Calu3 (cell line): ENCODE measurements at regions of chr6 and their contacts with region 1.

Region 1: GRCh38 chr6:79789843-79790242 is 157.5 kb downstream of the ELOVL4 start:
- DNase-seq: no peak
- H3K4me3 Mint-ChIP-seq: no peak overlapping the region
- H3K27ac Mint-ChIP-seq: no peak overlapping the region
- H3K4me1 Mint-ChIP-seq: peaks cover 10% of the 10 kb centered on the region
- H3K27me3 Mint-ChIP-seq: no peaks in the 10 kb centered on the region
- CTCF ChIP-seq: no peak

Region 2: DNA sequence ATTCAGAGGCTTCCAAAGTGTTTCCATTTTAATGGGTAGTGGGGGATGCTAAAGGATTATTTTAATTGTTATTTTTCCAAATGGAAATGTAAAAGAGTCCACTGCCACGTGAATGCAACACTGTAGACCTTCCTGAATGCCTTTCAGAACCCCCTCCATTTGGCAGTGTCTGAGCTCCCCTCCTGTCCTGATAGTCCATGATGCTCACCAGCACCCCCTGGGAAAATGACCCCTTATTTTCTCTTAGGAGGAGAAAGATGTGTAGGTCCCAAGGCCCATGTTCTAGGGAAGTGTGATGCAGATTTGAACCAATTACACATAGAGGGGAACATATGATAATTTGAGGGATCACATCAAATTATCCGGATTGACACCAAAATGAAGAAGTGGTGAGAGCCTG is 205.5 kb before region 1 on chr6:
- CTCF ChIA-PET with region 1: no interaction called
- intact Hi-C with region 1: no loop called
- DNase-seq: no peak
- H3K4me3 Mint-ChIP-seq: no peak overlapping the region
- H3K27ac Mint-ChIP-seq: no peak overlapping the region
- H3K4me1 Mint-ChIP-seq: no peaks in the 10 kb centered on the region
- H3K27me3 Mint-ChIP-seq: no peaks in the 10 kb centered on the region
- CTCF ChIP-seq: no peak

Region 3: DNA sequence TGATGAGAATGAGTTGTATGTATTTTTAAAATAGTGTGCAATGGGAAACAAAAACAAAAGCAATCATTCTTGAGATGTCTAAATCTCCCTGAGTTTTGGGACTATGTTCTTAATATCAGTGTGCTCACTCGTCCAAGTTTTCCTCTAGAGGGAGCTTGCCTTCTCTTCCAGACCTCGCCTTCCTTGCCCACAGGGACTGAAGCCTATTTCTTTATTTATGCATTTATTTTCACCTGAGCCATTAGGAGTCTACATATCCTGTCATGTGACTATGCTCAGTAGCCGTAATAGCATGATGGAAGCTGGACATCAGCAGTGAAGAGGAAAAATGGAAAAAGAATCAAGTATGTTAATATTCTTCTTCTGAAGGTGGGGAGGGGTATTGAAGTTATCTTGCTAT is 27.5 kb before region 1 on chr6:
- CTCF ChIA-PET with region 1: no interaction called
- intact Hi-C with region 1: loop called (anchors 1 kb)
- DNase-seq: peak; percentile 13
- H3K4me3 Mint-ChIP-seq: no peak overlapping the region
- H3K27ac Mint-ChIP-seq: no peak overlapping the region
- H3K4me1 Mint-ChIP-seq: peaks cover 7% of the 10 kb centered on the region
- H3K27me3 Mint-ChIP-seq: no peaks in the 10 kb centered on the region
- CTCF ChIP-seq: peak; percentile 13

Region 4: DNA sequence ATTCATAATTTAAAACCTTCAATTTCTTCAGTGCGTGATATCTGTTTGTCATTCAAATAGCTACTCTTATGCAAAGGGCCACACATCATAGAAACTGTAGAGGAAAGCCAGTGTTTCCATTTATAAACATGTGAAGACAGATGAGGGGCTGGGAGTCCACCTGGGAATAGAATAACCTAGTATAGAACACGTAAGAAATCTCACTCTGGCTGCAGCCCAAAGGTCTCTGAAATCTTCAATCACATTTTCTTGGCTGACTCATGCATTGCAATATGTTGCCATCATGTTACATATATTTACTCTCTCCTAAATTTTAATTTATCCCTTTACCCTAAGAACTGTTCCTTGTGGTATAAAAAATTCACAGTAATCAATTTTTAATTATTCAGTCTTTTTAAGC is 34.4 kb after region 1 on chr6:
- CTCF ChIA-PET with region 1: no interaction called
- intact Hi-C with region 1: no loop called
- DNase-seq: no peak
- H3K4me3 Mint-ChIP-seq: no peak overlapping the region
- H3K27ac Mint-ChIP-seq: no peak overlapping the region
- H3K4me1 Mint-ChIP-seq: no peaks in the 10 kb centered on the region
- H3K27me3 Mint-ChIP-seq: no peaks in the 10 kb centered on the region
- CTCF ChIP-seq: no peak

Region 5: DNA sequence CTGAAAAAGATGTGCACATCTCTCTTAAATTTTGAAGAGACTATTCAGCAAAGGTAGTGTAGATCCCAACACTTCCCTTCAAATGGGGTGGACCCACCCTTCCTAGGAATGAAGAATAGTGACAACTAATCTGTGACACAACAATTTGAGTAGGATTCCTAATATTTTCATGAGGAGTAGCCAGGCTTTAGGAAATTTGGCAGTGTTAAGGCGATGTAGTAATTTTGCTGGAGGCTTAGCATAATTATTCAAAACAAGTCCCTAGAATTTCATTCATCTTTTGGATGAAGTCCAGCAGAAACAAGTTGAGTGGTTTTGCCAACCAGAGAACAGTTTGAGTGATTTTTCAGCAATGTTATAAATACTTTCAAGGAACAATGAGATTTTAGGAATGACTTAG is 105.1 kb after region 1 on chr6:
- CTCF ChIA-PET with region 1: no interaction called
- intact Hi-C with region 1: no loop called
- DNase-seq: no peak
- H3K4me3 Mint-ChIP-seq: no peak overlapping the region
- H3K27ac Mint-ChIP-seq: peak overlapping the region; percentile 42
- H3K4me1 Mint-ChIP-seq: peaks cover 19% of the 10 kb centered on the region
- H3K27me3 Mint-ChIP-seq: peaks cover 14% of the 10 kb centered on the region
- CTCF ChIP-seq: no peak